B cell (primary cell): ENCODE measurements at regions of chr17 and their contacts with region 1.

Region 1: DNA sequence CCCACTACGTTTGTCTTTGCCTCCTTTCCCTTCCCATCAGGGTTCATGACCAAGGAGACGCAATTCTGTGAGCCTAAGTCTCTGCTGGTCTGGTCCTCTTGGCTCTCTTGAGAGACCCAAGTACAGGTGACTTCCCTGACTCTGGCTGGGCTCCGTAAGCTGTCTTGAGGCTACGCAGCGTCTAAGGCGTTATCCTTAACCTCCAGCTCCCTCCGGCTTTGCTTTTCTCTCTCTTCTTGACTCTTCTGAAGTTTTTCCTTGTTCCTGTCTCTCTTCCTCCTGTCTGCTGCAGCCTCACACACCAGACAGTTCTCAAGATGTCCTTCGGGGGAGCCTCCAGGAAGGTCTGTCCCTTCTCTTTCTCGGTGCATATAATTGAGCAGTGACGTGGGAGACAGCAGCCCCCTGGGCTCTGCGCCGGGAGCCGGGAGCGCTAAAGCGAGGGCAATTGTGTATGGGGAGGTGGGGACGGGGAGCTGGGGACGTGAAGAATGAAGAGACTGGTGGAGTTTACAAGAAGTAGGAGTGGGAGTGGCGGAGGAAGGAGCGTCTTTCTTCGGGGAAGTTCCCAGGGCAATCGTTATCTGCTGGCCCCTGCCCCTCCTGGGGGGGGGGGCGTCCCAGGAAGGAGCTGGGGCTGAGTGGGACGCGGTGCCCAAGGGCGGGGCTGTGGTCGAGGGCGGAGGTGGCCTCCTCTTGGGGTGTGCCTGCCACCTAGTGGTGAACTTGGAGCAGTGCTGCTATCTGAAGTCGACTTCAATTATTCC is 6.9 kb upstream of the PIRT start:
- DNase-seq: peak; percentile 79
- ATAC-seq: peak; percentile 95
- H3K4me3 ChIP-seq: peak overlapping the region in 4 of 5 experiments; percentile 25 to 52 (median 38)
- H3K4me3 Mint-ChIP-seq: peak overlapping the region; percentile 90
- H3K27ac ChIP-seq: no peak overlapping the region
- H3K27ac Mint-ChIP-seq: peak overlapping the region; percentile 10
- H3K4me1 ChIP-seq: peaks cover 6 to 7% of the 10 kb centered on the region in 2 donors
- H3K4me1 Mint-ChIP-seq: peaks cover 8% of the 10 kb centered on the region
- H3K27me3 ChIP-seq: peaks cover 0 to 14% (median 0%) of the 10 kb centered on the region in 4 experiments
- H3K27me3 Mint-ChIP-seq: peaks cover 19% of the 10 kb centered on the region
- CTCF ChIP-seq: peak; percentile 95

Region 2: DNA sequence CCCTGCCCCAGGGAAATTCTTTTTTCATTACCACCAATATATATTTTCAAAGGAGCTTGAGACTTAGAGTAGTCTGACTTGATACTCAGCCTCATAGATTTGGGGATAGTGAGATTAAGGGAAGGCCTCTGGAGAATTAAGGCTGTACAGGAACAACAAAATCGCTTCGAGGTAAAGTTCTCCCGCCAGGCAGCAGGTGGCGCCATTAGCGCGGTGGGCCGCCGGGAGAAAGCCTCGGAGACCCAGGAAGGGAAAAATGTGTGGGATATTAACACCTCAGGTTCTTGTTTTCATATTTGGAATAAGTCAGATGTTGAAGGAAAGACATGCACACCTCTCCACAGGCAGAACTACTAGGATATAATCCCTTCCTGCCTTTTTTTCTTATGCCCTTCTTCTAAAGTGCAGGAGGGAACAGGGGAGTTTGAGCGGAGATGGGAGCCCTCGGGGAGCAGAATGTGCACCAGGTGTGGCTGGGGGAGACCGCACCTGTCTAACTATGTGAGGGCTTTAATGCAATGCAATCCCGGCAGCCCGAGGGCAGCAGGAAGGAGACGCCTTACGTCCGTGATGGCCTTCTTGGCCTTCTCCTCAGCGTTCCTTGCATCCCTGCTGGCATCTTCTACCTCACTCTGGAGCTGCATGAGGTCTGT is 213.6 kb before region 1 on chr17:
- CTCF ChIA-PET with region 1: interaction called, 48 read pairs
- POLR2A ChIA-PET with region 1: no interaction called
- intact Hi-C with region 1: no loop called
- DNase-seq: peak; percentile 43
- ATAC-seq: no peak
- H3K4me3 ChIP-seq: no peak overlapping the region
- H3K4me3 Mint-ChIP-seq: no peak overlapping the region
- H3K27ac ChIP-seq: no peak overlapping the region
- H3K27ac Mint-ChIP-seq: no peak overlapping the region
- H3K4me1 ChIP-seq: peaks cover 13 to 26% of the 10 kb centered on the region in 2 donors
- H3K4me1 Mint-ChIP-seq: peaks cover 28% of the 10 kb centered on the region
- H3K27me3 ChIP-seq: no peaks in the 10 kb centered on the region
- H3K27me3 Mint-ChIP-seq: no peaks in the 10 kb centered on the region
- CTCF ChIP-seq: peak; percentile 92

Region 3: GRCh38 chr17:10640475-10640874 is 204.3 kb before region 1 on chr17:
- CTCF ChIA-PET with region 1: interaction called, 100 read pairs
- POLR2A ChIA-PET with region 1: no interaction called
- intact Hi-C with region 1: no loop called
- DNase-seq: no peak
- ATAC-seq: no peak
- H3K4me3 ChIP-seq: no peak overlapping the region
- H3K4me3 Mint-ChIP-seq: no peak overlapping the region
- H3K27ac ChIP-seq: no peak overlapping the region
- H3K27ac Mint-ChIP-seq: no peak overlapping the region
- H3K4me1 ChIP-seq: peaks cover 0 to 7% of the 10 kb centered on the region in 2 donors
- H3K4me1 Mint-ChIP-seq: peaks cover 4% of the 10 kb centered on the region
- H3K27me3 ChIP-seq: no peaks in the 10 kb centered on the region
- H3K27me3 Mint-ChIP-seq: no peaks in the 10 kb centered on the region
- CTCF ChIP-seq: no peak

Region 4: DNA sequence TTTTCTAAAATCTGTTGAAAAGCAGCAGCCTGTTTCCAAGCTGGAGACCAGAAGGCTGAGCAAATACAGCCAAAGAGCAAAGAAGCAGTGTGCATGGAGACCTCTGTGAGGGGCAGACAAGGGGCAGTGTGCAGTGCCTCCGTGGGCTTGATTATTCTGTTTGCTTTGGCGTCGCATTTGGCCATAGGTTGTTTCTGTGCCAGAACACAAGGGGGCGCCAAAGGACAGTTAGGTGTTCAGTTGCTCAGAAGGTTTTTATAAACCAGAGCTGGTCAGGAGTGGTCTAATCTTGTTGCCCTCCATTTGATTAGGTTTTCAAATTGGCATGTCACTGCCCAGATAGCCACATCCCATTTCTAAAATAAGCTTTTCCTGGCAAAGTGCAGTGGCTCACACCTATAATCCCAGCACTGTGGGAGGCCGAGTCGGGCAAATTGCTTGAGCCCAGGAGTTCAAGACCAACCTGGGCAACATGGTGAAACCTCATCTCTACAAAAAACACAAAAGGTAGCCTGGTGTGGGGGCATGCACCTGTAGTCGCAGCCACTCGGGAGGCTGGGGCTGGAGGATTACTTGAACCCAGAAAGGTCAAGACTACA is 198.3 kb before region 1 on chr17:
- CTCF ChIA-PET with region 1: interaction called, 100 read pairs
- POLR2A ChIA-PET with region 1: no interaction called
- intact Hi-C with region 1: no loop called
- DNase-seq: peak; percentile 75
- ATAC-seq: peak; percentile 47
- H3K4me3 ChIP-seq: no peak overlapping the region
- H3K4me3 Mint-ChIP-seq: no peak overlapping the region
- H3K27ac ChIP-seq: no peak overlapping the region
- H3K27ac Mint-ChIP-seq: no peak overlapping the region
- H3K4me1 ChIP-seq: no peaks in the 10 kb centered on the region
- H3K4me1 Mint-ChIP-seq: peaks cover 2% of the 10 kb centered on the region
- H3K27me3 ChIP-seq: no peaks in the 10 kb centered on the region
- H3K27me3 Mint-ChIP-seq: no peaks in the 10 kb centered on the region
- CTCF ChIP-seq: peak; percentile 94

Region 5: DNA sequence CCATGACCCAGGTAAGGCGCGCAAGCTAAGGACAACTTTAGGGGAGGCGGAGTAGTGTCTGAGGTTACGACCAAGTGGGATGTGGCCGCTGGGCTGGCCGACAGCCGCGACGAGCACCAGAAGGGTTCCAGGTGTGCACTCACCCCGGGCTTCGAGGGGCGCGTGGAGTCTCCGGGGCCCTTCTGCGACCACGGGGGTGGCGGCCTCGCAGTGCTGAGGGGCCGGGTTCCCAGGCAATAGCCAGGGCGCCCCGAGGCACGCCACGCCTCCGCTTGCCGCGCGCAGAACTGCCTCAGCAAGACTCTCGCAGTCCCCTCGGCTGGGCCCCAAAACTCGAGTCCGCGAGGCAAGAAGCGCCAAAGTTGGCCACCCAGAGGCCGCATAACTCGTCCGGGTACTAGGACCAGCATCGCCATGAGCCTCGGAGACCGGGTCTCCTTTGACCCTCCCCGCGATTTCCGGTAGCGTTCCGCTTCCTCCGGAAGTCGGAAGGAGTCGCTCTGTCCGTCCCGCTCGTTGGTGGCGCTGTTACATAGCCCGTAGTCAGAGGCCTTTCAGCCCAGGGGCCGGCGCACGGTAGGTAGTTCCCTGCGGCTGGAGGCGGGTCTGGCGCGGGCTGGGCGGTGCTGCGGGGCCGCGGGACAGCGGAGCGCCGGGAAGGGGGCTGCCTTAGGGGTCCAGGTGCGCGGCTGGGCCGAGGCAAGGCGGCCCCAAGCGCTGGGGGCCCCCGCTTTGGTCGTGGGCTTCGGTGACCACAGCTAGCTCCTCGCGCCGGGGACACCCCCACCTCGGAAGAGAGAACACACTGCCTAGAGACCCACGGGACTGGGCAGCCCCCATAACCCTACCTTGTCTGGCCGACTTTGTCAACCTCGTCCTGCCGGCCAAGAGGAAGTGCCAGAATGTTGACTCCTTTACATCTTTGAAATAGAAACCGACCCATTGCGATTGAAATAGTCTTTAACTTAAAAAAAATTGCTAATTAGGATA is 147.4 kb before region 1 on chr17 and contains the starts of genes ADPRM and SCO1:
- CTCF ChIA-PET with region 1: interaction called, 4 read pairs
- POLR2A ChIA-PET with region 1: no interaction called
- intact Hi-C with region 1: loop called (anchors 1 kb)
- DNase-seq: peak; percentile 93
- ATAC-seq: peak; percentile 96
- H3K4me3 ChIP-seq: peak within 1 kb of the TSS; percentile 78 to 91 (median 84)
- H3K4me3 Mint-ChIP-seq: peak within 1 kb of the TSS; percentile 93
- H3K27ac ChIP-seq: peak within 1 kb of the TSS; percentile 81 to 93
- H3K27ac Mint-ChIP-seq: peak within 1 kb of the TSS; percentile 96
- H3K4me1 ChIP-seq: peaks cover 28 to 46% of the 10 kb centered on the region in 2 donors
- H3K4me1 Mint-ChIP-seq: peaks cover 47% of the 10 kb centered on the region
- H3K27me3 ChIP-seq: no peaks in the 10 kb centered on the region
- H3K27me3 Mint-ChIP-seq: no peaks in the 10 kb centered on the region
- CTCF ChIP-seq: peak; percentile 31
- total RNA-seq, gene ADPRM: 29.1 and 32.4 TPM in 2 replicates
- total RNA-seq, gene SCO1: 28.6 and 33.1 TPM in 2 replicates